MCF 10A (cell line): ENCODE measurements at regions of chr10 and their contacts with region 1.

Region 1: GRCh38 chr10:35090162-35090954 is at the start of gene CUL2:
- DNase-seq: peak; percentile 93
- H3K4me3 Mint-ChIP-seq: peak within 1 kb of the TSS; percentile 83
- H3K27ac Mint-ChIP-seq: peak within 1 kb of the TSS; percentile 79
- H3K4me1 Mint-ChIP-seq: peaks cover 22% of the 10 kb centered on the region
- H3K27me3 Mint-ChIP-seq: no peaks in the 10 kb centered on the region
- CTCF ChIP-seq: no peak
- total RNA-seq, gene CUL2: 30.7 and 30.9 TPM in 2 replicates

Region 2: GRCh38 chr10:35005868-35006267 is 84.5 kb before region 1 on chr10:
- CTCF ChIA-PET with region 1: no interaction called
- POLR2A ChIA-PET with region 1: interaction called, 5 read pairs
- intact Hi-C with region 1: loop called (anchors 5 kb)
- DNase-seq: peak; percentile 98
- H3K4me3 Mint-ChIP-seq: no peak overlapping the region
- H3K27ac Mint-ChIP-seq: peak overlapping the region; percentile 29
- H3K4me1 Mint-ChIP-seq: peaks cover 13% of the 10 kb centered on the region
- H3K27me3 Mint-ChIP-seq: no peaks in the 10 kb centered on the region
- CTCF ChIP-seq: no peak